Right ventricle myocardium inferior (tissue), 1 donor: ENCODE measurements at regions of chr10 and their contacts with region 1.

Region 1: DNA sequence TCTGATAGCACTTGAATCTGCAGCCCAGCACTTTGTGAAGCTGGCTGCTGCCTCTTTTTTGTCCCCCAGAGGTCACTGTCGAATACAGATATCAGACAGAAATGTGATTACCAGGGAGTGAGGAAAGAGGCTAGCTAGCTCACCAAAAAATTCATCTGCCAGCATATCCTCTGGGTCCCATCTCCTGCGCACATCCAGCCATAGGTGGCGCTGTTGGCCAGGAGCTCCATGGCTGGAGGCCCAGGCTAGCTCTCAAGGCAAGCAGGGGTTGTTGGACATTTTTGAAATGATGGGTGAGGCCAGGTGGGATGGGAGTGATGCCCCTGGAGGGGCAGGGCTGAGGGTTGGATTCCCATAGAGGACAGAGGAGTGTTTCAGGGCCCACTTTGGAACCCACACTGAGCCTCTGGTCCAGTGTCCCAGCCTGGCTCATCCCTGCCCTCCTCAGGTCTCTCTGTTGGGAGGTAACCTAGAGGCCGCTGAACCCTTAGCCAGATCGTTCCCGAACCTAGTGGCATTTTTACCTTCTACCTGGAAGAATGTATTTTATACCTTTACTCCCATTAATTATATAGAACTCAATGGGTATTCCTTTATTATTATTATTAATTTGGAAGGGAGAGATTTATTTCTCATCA is 14.8 kb downstream of the DPCD start:
- DNase-seq: peak; percentile 82
- ATAC-seq: peak; percentile 80

Region 2: GRCh38 chr10:101693978-101694673 is 91.2 kb after region 1 on chr10:
- intact Hi-C with region 1: loop called (anchors 10 kb)
- DNase-seq: peak; percentile 81
- ATAC-seq: peak; percentile 90